ENCODE measurements at regions of chr15 and their contacts with region 1.

Region 1: GRCh38 chr15:41904541-41905005 is 10.7 kb upstream of the SPTBN5 start:
- DNase-seq: peak; percentile 34
- ATAC-seq: peak; percentile 91
- H3K4me3 ChIP-seq: no peak overlapping the region
- H3K27ac ChIP-seq: no peak overlapping the region
- H3K4me1 ChIP-seq: no peaks in the 10 kb centered on the region
- H3K27me3 ChIP-seq: no peaks in the 10 kb centered on the region
- CTCF ChIP-seq: peak; percentile 68 to 92 (median 86)
- POLR2A ChIP-seq: no peak
- RAD21 ChIP-seq: peak; percentile 89

Region 2: DNA sequence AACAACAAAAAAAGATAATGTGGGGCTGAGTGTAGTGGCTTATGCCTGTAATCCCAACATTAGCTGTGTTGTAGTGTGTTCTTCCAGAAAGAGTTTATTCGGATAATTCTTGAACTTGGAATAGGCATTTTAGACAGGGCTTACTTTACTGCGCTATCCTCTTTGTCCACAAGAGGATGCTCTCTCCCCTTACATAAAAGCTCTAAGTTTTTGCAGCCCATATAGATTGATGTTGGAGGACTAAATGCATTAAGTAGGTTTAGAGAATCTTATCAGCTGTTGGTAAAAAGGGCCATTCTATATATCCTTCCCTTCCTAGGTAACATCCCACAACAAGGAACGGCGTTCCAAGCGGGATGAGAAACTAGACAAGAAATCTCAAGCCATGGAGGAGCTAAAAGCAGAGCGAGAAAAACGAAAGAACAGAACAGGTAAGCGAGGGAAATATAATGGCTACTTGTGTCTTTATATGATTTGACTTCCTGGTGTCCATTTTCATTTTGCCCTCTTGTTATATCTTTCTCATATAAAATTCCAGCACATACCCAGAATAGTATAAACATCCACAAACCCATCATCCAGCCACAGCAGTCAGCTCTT is 438.7 kb before region 1 on chr15:
- CTCF ChIA-PET with region 1: interaction called, 7 read pairs
- POLR2A ChIA-PET with region 1: no interaction called
- RAD21 ChIA-PET with region 1: no interaction called
- intact Hi-C with region 1: loop called (anchors 5 kb)
- DNase-seq: peak; percentile 45
- ATAC-seq: peak; percentile 80
- H3K4me3 ChIP-seq: no peak overlapping the region
- H3K27ac ChIP-seq: no peak overlapping the region
- H3K4me1 ChIP-seq: no peaks in the 10 kb centered on the region
- H3K27me3 ChIP-seq: no peaks in the 10 kb centered on the region
- CTCF ChIP-seq: peak; percentile 84 to 99 (median 98)
- POLR2A ChIP-seq: no peak
- RAD21 ChIP-seq: peak; percentile 90

Region 3: GRCh38 chr15:41603941-41604911 is 300.3 kb before region 1 on chr15:
- CTCF ChIA-PET with region 1: interaction called, 9 read pairs
- POLR2A ChIA-PET with region 1: no interaction called
- RAD21 ChIA-PET with region 1: interaction called in 1 of 2 experiments, 3 read pairs
- intact Hi-C with region 1: loop called (anchors 10 kb)
- DNase-seq: peak; percentile 70
- ATAC-seq: peak; percentile 97
- H3K4me3 ChIP-seq: peak overlapping the region; percentile 33 to 44
- H3K27ac ChIP-seq: no peak overlapping the region
- H3K4me1 ChIP-seq: peaks cover 4 to 32% of the 10 kb centered on the region in 2 experiments; a peak in 3 of 4 replicates
- H3K27me3 ChIP-seq: no peaks in the 10 kb centered on the region
- CTCF ChIP-seq: peak; percentile 76 to 90 (median 83)
- POLR2A ChIP-seq: no peak
- RAD21 ChIP-seq: peak; percentile 75

Region 4: GRCh38 chr15:41827880-41828806 is 76.4 kb before region 1 on chr15 and contains the start of gene JMJD7:
- CTCF ChIA-PET with region 1: interaction called, 3 read pairs
- POLR2A ChIA-PET with region 1: no interaction called
- RAD21 ChIA-PET with region 1: no interaction called
- intact Hi-C with region 1: loop called (anchors 5 kb)
- DNase-seq: peak; percentile 51
- ATAC-seq: peak; percentile 94
- H3K4me3 ChIP-seq: peak within 1 kb of the TSS; percentile 90
- H3K27ac ChIP-seq: peak within 1 kb of the TSS; percentile 33; the same call in 1 of the 2 replicates
- H3K4me1 ChIP-seq: peaks cover 6 to 18% of the 10 kb centered on the region in 2 experiments; a peak in 3 of 4 replicates
- H3K27me3 ChIP-seq: no peaks in the 10 kb centered on the region
- CTCF ChIP-seq: no peak
- POLR2A ChIP-seq: no peak
- RAD21 ChIP-seq: no peak
- total RNA-seq, gene JMJD7: 13.5 TPM

Region 5: DNA sequence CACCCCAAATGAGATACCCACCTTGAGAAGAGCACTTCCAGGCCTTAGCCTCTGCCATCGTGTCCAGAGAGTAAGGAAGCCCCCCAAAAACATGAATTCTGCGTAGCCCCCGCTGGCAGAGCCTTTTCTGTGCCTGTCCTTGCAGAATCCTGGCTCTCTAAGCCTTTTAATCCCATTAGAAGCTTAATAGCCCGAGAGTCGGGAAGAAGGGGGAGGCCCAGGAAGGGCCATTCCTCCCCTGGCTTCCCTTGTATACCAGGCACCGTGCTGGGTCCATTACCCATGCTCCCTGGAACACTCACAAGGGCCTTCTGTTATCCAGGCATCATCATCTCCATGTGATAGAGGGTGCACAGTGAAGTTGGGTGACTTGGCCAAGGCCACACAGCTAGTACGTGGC is 17.8 kb before region 1 on chr15:
- CTCF ChIA-PET with region 1: no interaction called
- POLR2A ChIA-PET with region 1: no interaction called
- RAD21 ChIA-PET with region 1: no interaction called
- intact Hi-C with region 1: no loop called
- DNase-seq: no peak
- ATAC-seq: no peak
- H3K4me3 ChIP-seq: no peak overlapping the region
- H3K27ac ChIP-seq: no peak overlapping the region
- H3K4me1 ChIP-seq: no peaks in the 10 kb centered on the region
- H3K27me3 ChIP-seq: no peaks in the 10 kb centered on the region
- CTCF ChIP-seq: no peak
- POLR2A ChIP-seq: no peak
- RAD21 ChIP-seq: no peak

Region 6: DNA sequence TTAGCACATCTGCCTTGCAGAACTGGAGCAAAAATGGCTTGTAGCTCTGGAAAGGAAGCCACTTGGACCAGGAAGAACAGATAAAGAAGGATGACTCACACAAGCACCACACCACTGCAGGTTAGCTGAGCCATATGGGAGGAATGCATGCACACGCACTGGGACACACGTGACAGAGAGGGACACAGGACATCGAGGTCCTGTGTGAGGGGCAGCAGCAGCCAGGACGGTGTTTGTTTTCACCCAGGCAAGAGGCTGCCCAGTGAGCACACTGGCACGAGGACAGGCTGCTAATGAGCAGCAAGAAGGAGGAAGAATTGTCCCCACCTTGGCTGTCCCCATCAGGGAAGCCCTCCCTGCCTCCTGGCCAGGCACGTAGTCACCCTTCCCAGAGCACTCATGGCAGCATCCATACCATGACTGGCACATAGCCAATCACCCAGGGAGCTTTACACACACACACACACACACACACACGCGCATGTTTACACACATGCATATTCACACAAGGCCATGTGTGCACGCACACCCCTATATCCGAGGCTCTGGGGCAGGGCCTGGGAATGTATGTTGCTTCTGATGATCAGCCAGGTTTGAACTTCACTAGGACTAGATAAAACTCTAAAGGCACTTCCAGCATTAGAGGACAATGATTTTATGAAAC is 13.3 kb after region 1 on chr15:
- CTCF ChIA-PET with region 1: interaction called, 15 read pairs
- POLR2A ChIA-PET with region 1: no interaction called
- RAD21 ChIA-PET with region 1: no interaction called
- intact Hi-C with region 1: no loop called
- DNase-seq: peak; percentile 57
- ATAC-seq: peak; percentile 97
- H3K4me3 ChIP-seq: no peak overlapping the region; a peak in 1 of 4 replicates
- H3K27ac ChIP-seq: peak overlapping the region; percentile 58
- H3K4me1 ChIP-seq: peaks cover 11 to 26% of the 10 kb centered on the region in 2 experiments
- H3K27me3 ChIP-seq: no peaks in the 10 kb centered on the region
- CTCF ChIP-seq: no peak
- POLR2A ChIP-seq: no peak
- RAD21 ChIP-seq: no peak